ENCODE measurements at regions of chr15 and their contacts with region 1.

Region 1: GRCh38 chr15:63466378-63467192 is 37.8 kb upstream of the USP3 start:
- DNase-seq: peak; percentile 34
- ATAC-seq: peak; percentile 93
- H3K4me3 Mint-ChIP-seq: no peak overlapping the region
- H3K27ac Mint-ChIP-seq: no peak overlapping the region
- H3K4me1 Mint-ChIP-seq: peaks cover 5% of the 10 kb centered on the region
- H3K27me3 Mint-ChIP-seq: peaks cover 3% of the 10 kb centered on the region
- CTCF ChIP-seq: peak; percentile 34

Region 2: GRCh38 chr15:63389902-63390670 is 76.5 kb before region 1 on chr15:
- CTCF ChIA-PET with region 1: no interaction called
- POLR2A ChIA-PET with region 1: no interaction called
- DNase-seq: no peak
- ATAC-seq: no peak; the same call in 1 of the 2 replicates
- H3K4me3 Mint-ChIP-seq: no peak overlapping the region
- H3K27ac Mint-ChIP-seq: no peak overlapping the region
- H3K4me1 Mint-ChIP-seq: 0 out of 2 replicates have a peak, but pooled peaks cover 3% of the 10 kb centered on the region
- H3K27me3 Mint-ChIP-seq: peaks cover 55% of the 10 kb centered on the region
- CTCF ChIP-seq: no peak

Region 3: GRCh38 chr15:63480441-63480821 is 13.8 kb after region 1 on chr15:
- CTCF ChIA-PET with region 1: interaction called, 23 read pairs
- POLR2A ChIA-PET with region 1: no interaction called
- DNase-seq: no peak
- ATAC-seq: no peak
- H3K4me3 Mint-ChIP-seq: no peak overlapping the region
- H3K27ac Mint-ChIP-seq: peak overlapping the region; percentile 74; the same call in 1 of the 2 replicates
- H3K4me1 Mint-ChIP-seq: peaks cover 56% of the 10 kb centered on the region
- H3K27me3 Mint-ChIP-seq: 0 out of 2 replicates have a peak, but pooled peaks cover 2% of the 10 kb centered on the region
- CTCF ChIP-seq: no peak

Region 4: GRCh38 chr15:63487076-63487757 is 20.6 kb after region 1 on chr15:
- CTCF ChIA-PET with region 1: interaction called, 20 read pairs
- POLR2A ChIA-PET with region 1: no interaction called
- DNase-seq: peak; percentile 95
- ATAC-seq: peak; percentile 94
- H3K4me3 Mint-ChIP-seq: no peak overlapping the region
- H3K27ac Mint-ChIP-seq: no peak overlapping the region
- H3K4me1 Mint-ChIP-seq: peaks cover 37% of the 10 kb centered on the region
- H3K27me3 Mint-ChIP-seq: peaks cover 17% of the 10 kb centered on the region
- CTCF ChIP-seq: peak; percentile 85

Region 5: GRCh38 chr15:63504247-63504978 is 37.8 kb after region 1 on chr15 and contains the start of gene USP3:
- CTCF ChIA-PET with region 1: interaction called, 14 read pairs
- POLR2A ChIA-PET with region 1: interaction called, 3 read pairs
- DNase-seq: peak; percentile 92
- ATAC-seq: peak; percentile 68
- H3K4me3 Mint-ChIP-seq: peak within 1 kb of the TSS; percentile 76
- H3K27ac Mint-ChIP-seq: no peak within 1 kb of the TSS
- H3K4me1 Mint-ChIP-seq: peaks cover 76% of the 10 kb centered on the region
- H3K27me3 Mint-ChIP-seq: peaks cover 36% of the 10 kb centered on the region
- CTCF ChIP-seq: no peak
- total RNA-seq, gene USP3: 30.0 to 36.6 TPM (median 30.8 TPM) in 3 replicates

Region 6: DNA sequence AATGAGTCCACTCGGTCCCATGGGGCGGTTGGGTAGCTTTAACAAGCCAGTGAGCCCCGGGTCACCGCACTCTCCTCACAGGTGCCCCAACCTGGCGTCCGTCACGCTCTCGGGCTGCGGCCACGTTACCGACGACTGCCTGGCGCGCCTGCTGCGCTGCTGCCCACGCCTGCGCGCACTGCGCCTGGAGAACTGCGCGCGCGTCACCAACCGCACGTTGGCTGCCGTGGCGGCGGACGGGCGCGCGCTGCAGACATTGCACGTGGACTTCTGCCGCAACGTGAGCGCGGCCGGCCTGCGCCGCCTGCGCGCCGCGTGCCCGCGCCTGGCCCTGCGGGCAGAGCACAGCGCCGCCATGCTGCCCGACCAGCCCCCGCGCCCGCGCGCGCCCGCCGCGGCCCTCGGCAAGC is 134.0 kb after region 1 on chr15:
- CTCF ChIA-PET with region 1: interaction called, 63 read pairs
- POLR2A ChIA-PET with region 1: no interaction called
- DNase-seq: peak; percentile 67
- ATAC-seq: peak; percentile 60
- H3K4me3 Mint-ChIP-seq: peak overlapping the region; percentile 83
- H3K27ac Mint-ChIP-seq: no peak overlapping the region
- H3K4me1 Mint-ChIP-seq: peaks cover 21% of the 10 kb centered on the region
- H3K27me3 Mint-ChIP-seq: peaks cover 28% of the 10 kb centered on the region
- CTCF ChIP-seq: no peak

Region 7: DNA sequence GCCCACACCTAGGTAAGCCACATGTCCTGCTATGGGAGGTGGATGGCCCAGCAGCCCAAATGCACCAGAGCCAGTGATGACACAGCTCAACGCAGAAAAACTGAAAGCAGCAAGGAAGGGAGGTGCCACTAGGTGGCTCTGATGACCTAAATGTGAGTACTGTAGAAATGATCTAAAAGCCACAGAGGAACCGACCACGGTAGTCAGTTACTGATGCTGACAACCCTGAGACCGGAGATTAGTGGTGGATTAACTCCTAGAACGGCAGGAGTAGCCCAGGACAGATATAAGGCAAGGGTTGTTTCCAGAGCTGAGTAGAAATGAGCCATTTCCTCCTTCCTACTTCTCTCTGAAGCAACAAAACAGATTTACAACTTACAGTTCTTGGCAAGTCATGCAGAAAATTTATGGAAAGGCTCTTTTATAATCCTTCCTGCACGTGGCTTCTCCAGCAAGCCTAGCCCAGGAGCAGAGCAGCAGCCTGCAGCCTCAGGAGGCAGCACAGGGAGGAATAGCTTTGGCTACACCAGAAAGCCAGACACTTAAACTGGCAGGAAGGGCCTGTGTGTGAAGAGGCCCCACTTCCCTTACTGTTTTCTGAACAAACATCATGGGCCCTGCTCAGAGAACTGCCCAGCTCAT is 143.7 kb after region 1 on chr15:
- CTCF ChIA-PET with region 1: interaction called, 14 read pairs
- POLR2A ChIA-PET with region 1: no interaction called
- DNase-seq: peak; percentile 78
- ATAC-seq: peak; percentile 95
- H3K4me3 Mint-ChIP-seq: no peak overlapping the region
- H3K27ac Mint-ChIP-seq: peak overlapping the region; percentile 31; the same call in 1 of the 2 replicates
- H3K4me1 Mint-ChIP-seq: 0 out of 2 replicates have a peak, but pooled peaks cover 4% of the 10 kb centered on the region
- H3K27me3 Mint-ChIP-seq: no peaks in the 10 kb centered on the region
- CTCF ChIP-seq: peak; percentile 56